Activated CD8-positive, alpha-beta T cell treated with anti-CD3 and anti-CD28 coated beads for 36 hours (primary cell): ENCODE measurements at regions of chr6 and their contacts with region 1.

Region 1: DNA sequence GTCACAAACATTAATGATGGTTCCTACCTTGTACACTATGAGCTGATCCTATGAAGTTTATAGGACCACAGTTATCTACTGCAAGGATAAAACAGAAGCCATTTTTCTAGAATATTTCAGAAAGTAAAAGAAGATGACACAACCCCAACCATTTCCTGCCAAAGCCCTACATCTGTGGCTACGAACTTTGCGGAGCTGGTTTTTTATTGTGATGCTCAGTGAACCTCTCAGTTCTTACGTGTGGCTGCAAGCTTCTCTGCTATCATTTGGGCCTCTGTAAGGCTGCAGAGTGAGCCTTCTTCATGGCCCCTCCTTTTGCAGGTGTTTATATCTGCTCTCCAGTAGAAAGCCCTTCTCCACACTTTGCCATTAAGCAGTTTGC is 17.8 kb upstream of the TAGAP start:
- DNase-seq: peak; percentile 84
- ATAC-seq: peak; percentile 79
- H3K4me3 Mint-ChIP-seq: peak overlapping the region; percentile 42
- H3K27ac Mint-ChIP-seq: peak overlapping the region; percentile 95
- H3K4me1 Mint-ChIP-seq: peaks cover 98% of the 10 kb centered on the region
- H3K27me3 Mint-ChIP-seq: no peaks in the 10 kb centered on the region
- CTCF ChIP-seq: no peak

Region 2: GRCh38 chr6:158737710-158738615 is 324.6 kb before region 1 on chr6:
- CTCF ChIA-PET with region 1: no interaction called
- POLR2A ChIA-PET with region 1: no interaction called
- intact Hi-C with region 1: no loop called
- DNase-seq: no peak
- ATAC-seq: no peak
- H3K4me3 Mint-ChIP-seq: no peak overlapping the region
- H3K27ac Mint-ChIP-seq: no peak overlapping the region
- H3K4me1 Mint-ChIP-seq: peaks cover 2% of the 10 kb centered on the region
- H3K27me3 Mint-ChIP-seq: no peaks in the 10 kb centered on the region
- CTCF ChIP-seq: no peak

Region 3: DNA sequence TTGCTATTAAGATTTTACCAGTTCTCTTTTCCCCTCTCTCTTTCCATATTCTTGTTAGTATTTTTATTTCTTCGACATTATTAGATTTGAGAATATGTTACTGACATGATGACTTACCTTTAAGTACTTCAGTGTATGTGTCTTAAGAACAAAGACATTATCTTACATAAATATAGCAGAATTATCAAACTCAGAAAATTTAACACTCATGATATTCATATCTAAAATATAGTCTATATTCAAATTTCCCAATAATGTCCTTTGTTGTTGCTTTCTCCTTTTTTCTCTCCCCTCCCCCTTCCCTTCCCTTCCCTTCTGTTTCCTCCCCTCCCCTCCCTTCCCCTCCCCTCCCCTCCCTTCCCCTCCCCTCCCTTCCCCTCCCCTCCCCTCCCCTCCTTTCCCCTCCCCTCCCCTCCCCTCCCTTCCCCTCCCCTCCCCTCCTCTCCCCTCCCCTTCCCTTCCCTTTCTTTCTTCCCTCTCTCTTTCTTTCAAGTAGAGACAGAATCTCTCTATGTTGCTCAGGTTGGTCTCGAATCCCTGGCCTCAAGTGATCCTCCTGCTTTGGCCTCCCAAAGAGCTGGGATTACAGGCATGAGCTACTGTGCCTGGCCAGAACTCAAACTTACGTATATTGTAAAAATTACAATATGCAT is 119.0 kb before region 1 on chr6:
- CTCF ChIA-PET with region 1: no interaction called
- POLR2A ChIA-PET with region 1: no interaction called
- intact Hi-C with region 1: no loop called
- DNase-seq: no peak
- ATAC-seq: no peak
- H3K4me3 Mint-ChIP-seq: no peak overlapping the region
- H3K27ac Mint-ChIP-seq: no peak overlapping the region
- H3K4me1 Mint-ChIP-seq: peaks cover 10% of the 10 kb centered on the region
- H3K27me3 Mint-ChIP-seq: peaks cover 8% of the 10 kb centered on the region
- CTCF ChIP-seq: no peak

Region 4: GRCh38 chr6:159074120-159074684 is 11.6 kb after region 1 on chr6:
- CTCF ChIA-PET with region 1: interaction called, 32 read pairs
- POLR2A ChIA-PET with region 1: interaction called, 35 read pairs
- intact Hi-C with region 1: no loop called
- DNase-seq: no peak
- ATAC-seq: no peak
- H3K4me3 Mint-ChIP-seq: peak overlapping the region; percentile 36
- H3K27ac Mint-ChIP-seq: no peak overlapping the region
- H3K4me1 Mint-ChIP-seq: peaks cover 83% of the 10 kb centered on the region
- H3K27me3 Mint-ChIP-seq: no peaks in the 10 kb centered on the region
- CTCF ChIP-seq: no peak

Region 5: GRCh38 chr6:159090530-159091480 is 28.2 kb after region 1 on chr6:
- CTCF ChIA-PET with region 1: interaction called, 6 read pairs
- POLR2A ChIA-PET with region 1: interaction called, 216 read pairs
- intact Hi-C with region 1: no loop called
- DNase-seq: no peak
- ATAC-seq: no peak
- H3K4me3 Mint-ChIP-seq: no peak overlapping the region
- H3K27ac Mint-ChIP-seq: peak overlapping the region; percentile 17
- H3K4me1 Mint-ChIP-seq: peaks cover 73% of the 10 kb centered on the region
- H3K27me3 Mint-ChIP-seq: no peaks in the 10 kb centered on the region
- CTCF ChIP-seq: no peak